PC-3 (cell line): ENCODE measurements at regions of chr19 and their contacts with region 1.

Region 1: DNA sequence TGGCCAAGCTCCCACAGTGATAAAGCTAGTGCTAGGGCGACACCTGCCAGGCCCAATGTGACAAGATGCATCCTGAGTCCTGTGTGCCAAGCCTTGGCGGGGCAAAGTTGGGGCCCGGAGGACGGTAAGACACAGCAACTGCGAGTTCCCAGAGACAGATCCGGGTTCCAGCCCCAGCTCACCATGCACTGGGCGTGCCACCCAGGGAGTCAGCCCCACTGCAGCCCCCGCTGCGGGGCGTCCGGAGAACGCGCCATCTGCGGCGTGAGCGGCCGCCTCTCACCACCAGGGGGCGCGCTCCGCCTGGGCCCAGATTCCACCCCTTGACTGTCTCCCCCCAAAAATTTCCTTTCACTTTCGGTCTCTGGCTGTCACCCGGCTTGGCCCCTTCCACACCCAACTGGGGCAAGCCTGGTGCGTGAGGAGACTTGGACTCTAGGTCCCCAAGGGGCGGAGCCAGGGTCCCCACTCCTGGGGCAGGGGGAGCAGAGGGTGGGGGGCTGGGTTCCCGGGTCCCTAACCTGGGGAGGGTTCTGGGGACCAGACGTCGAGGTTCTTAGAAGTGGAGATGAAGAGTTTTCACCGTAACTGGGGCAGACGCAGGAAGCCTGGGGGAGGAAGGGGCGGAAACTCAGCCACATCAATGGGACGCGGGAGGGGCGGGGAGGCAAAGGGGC is at the start of gene FLT3LG:
- DNase-seq: peak; percentile 77
- ATAC-seq: peak; percentile 80
- H3K4me3 ChIP-seq: peak within 1 kb of the TSS; percentile 82
- H3K27ac ChIP-seq: no peak within 1 kb of the TSS
- H3K4me1 ChIP-seq: no peaks in the 10 kb centered on the region
- H3K27me3 ChIP-seq: no peaks in the 10 kb centered on the region
- CTCF ChIP-seq: peak; percentile 99
- total RNA-seq, gene FLT3LG: 0.18 and 2.8 TPM in 2 replicates

Region 2: DNA sequence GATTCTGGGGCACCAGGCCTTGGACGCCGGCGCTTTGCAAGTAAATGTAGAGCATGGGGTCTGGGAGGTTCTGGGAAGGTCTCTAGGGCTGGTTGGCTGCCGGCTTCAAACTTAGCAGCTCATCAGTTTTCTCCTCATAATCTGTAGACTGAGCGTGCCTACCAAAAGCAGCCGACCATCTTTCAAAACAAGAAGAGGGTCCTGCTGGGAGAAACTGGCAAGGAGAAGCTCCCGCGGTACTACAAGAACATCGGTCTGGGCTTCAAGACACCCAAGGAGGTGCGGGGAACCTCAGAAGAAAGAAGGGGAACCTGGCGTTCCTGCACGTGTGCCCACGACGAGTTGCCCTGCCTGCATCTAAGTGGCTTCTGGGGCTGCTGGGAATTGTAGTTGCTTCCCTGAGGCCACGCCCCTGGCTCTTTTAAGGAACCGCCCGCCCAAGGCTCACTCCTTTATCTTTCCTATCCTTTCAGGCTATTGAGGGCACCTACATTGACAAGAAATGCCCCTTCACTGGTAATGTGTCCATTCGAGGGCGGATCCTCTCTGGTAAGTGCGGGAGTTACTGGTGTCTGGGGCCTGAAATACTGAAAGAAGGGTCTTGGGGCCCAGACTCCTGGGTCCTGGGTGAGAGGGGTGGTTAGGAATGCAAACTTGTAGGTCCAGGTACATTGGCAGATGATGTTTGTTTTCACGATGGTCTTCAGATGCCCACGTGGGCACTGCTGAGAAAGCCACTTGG is 23.2 kb after region 1 on chr19:
- CTCF ChIA-PET with region 1: interaction called, 10 read pairs
- POLR2A ChIA-PET with region 1: interaction called, 4 read pairs
- intact Hi-C with region 1: no loop called
- DNase-seq: peak; percentile 65
- ATAC-seq: no peak
- H3K4me3 ChIP-seq: peak overlapping the region; percentile 94
- H3K27ac ChIP-seq: peak overlapping the region; percentile 72
- H3K4me1 ChIP-seq: peaks cover 19% of the 10 kb centered on the region
- H3K27me3 ChIP-seq: no peaks in the 10 kb centered on the region
- CTCF ChIP-seq: no peak